A549 (cell line): ENCODE measurements at regions of chr6 and their contacts with region 1.

Region 1: GRCh38 chr6:131909408-131910218 is 41.6 kb downstream of the CCN2 start:
- DNase-seq: peak; percentile 27 to 63
- ATAC-seq: peak; percentile 90 to 95
- H3K4me3 ChIP-seq: no peak overlapping the region
- H3K27ac ChIP-seq: no peak overlapping the region
- H3K4me1 ChIP-seq: no peaks in the 10 kb centered on the region
- CTCF ChIP-seq: peak; percentile 80
- EP300 ChIP-seq: no peak
- POLR2A ChIP-seq: no peak
- RAD21 ChIP-seq: peak; percentile 78 to 84

Region 2: GRCh38 chr6:131694831-131695426 is 214.7 kb before region 1 on chr6:
- CTCF ChIA-PET with region 1: interaction called, 72 read pairs
- POLR2A ChIA-PET with region 1: no interaction called
- DNase-seq: peak; percentile 50 to 54
- ATAC-seq: peak; percentile 74 to 98; a peak in 5 of 6 replicates
- H3K4me3 ChIP-seq: no peak overlapping the region
- H3K27ac ChIP-seq: no peak overlapping the region
- H3K4me1 ChIP-seq: no peaks in the 10 kb centered on the region
- CTCF ChIP-seq: peak; percentile 63
- EP300 ChIP-seq: no peak
- POLR2A ChIP-seq: no peak
- RAD21 ChIP-seq: peak; percentile 76 to 82

Region 3: DNA sequence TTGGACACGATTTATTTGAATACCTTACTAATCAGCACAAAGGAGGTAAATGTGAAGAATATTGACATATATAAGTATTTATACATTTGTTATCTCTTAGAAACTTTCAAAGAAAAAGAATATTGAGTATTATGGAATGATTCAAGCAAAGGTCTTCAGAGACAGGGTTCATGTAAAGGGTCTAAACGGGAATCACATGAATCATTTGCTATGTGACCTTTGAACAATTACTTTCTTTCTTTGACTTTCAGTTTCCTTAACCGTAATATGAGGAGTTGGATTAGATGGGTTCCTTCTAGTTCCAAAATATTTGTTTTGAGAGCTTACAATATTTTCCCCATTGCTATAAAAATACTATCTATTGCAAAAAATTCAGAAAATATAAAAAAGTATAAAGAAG is 87.5 kb before region 1 on chr6:
- CTCF ChIA-PET with region 1: no interaction called
- POLR2A ChIA-PET with region 1: no interaction called
- DNase-seq: no peak
- ATAC-seq: no peak
- H3K4me3 ChIP-seq: no peak overlapping the region
- H3K27ac ChIP-seq: no peak overlapping the region
- H3K4me1 ChIP-seq: peaks cover 26% of the 10 kb centered on the region; the same call in 2 of the 3 replicates
- CTCF ChIP-seq: no peak
- EP300 ChIP-seq: no peak
- POLR2A ChIP-seq: no peak
- RAD21 ChIP-seq: no peak

Region 4: DNA sequence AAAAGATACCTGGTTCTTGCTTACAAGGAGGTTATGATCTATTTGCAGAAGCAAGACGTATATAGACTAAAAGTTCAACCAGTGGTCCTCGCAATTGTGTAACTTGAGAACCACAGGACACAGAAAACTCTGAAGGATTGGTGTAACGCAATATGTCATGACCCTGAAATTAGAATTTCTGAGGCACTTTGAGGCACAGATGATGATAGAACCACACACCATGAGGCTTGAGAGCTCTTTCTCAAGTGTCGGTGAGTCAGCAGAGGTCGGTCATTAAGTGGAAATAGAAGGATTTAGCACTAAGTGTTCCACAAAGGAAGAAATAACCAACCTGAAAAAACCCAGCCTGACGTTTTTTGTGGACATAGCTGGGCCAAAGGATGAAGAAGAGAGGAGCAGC is 56.8 kb after region 1 on chr6:
- CTCF ChIA-PET with region 1: no interaction called
- POLR2A ChIA-PET with region 1: no interaction called
- DNase-seq: no peak
- ATAC-seq: no peak
- H3K4me3 ChIP-seq: no peak overlapping the region
- H3K27ac ChIP-seq: no peak overlapping the region
- H3K4me1 ChIP-seq: no peaks in the 10 kb centered on the region
- CTCF ChIP-seq: no peak
- EP300 ChIP-seq: no peak
- POLR2A ChIP-seq: no peak
- RAD21 ChIP-seq: no peak

Region 5: DNA sequence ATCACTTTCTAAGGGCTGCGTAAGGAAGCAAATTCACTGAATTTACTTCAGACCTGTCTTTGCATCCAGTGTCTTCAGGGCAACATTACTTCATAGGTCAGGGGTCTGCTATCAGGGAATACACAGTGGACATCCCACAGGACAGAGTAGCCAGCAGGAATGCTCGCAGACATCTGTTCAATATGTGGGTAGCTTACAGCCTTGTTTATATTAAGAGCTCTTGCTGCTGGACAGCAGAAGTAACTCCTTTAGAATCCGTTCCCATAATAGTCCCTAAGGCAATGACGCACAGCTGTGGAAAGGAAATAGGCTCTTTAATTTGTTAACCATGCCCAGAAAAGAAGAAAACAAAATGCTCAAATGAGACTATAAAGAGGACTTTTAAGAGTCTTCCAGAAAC is 293.0 kb after region 1 on chr6:
- CTCF ChIA-PET with region 1: no interaction called
- POLR2A ChIA-PET with region 1: no interaction called
- DNase-seq: no peak
- ATAC-seq: no peak
- H3K4me3 ChIP-seq: no peak overlapping the region
- H3K27ac ChIP-seq: no peak overlapping the region
- H3K4me1 ChIP-seq: 0 out of 3 replicates have a peak, but pooled peaks cover 3% of the 10 kb centered on the region
- CTCF ChIP-seq: no peak
- EP300 ChIP-seq: no peak
- POLR2A ChIP-seq: no peak
- RAD21 ChIP-seq: no peak

Region 6: DNA sequence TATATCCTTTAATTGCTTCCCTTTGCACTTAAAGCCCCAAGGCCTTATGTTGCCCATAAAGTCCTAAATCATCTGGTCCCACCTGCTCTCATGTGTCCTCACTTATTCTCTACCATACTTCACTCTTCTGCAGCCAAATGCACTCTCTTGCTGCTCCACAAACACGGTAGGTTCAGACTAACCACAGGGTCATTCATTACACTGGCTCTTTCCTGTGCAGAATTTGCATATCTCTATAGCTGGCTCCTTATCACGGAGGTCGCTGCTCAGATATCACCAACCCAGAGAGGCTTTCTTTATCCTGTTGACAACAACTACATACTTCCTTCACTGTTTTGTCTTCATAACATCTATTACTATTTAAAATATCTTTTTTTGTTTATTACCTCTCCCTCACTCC is 404.8 kb after region 1 on chr6:
- CTCF ChIA-PET with region 1: no interaction called
- POLR2A ChIA-PET with region 1: no interaction called
- DNase-seq: no peak
- ATAC-seq: no peak
- H3K4me3 ChIP-seq: no peak overlapping the region
- H3K27ac ChIP-seq: no peak overlapping the region
- H3K4me1 ChIP-seq: no peaks in the 10 kb centered on the region
- CTCF ChIP-seq: no peak
- EP300 ChIP-seq: no peak
- POLR2A ChIP-seq: no peak
- RAD21 ChIP-seq: no peak